ENCODE measurements at regions of chr5 and their contacts with region 1.

Region 1: DNA sequence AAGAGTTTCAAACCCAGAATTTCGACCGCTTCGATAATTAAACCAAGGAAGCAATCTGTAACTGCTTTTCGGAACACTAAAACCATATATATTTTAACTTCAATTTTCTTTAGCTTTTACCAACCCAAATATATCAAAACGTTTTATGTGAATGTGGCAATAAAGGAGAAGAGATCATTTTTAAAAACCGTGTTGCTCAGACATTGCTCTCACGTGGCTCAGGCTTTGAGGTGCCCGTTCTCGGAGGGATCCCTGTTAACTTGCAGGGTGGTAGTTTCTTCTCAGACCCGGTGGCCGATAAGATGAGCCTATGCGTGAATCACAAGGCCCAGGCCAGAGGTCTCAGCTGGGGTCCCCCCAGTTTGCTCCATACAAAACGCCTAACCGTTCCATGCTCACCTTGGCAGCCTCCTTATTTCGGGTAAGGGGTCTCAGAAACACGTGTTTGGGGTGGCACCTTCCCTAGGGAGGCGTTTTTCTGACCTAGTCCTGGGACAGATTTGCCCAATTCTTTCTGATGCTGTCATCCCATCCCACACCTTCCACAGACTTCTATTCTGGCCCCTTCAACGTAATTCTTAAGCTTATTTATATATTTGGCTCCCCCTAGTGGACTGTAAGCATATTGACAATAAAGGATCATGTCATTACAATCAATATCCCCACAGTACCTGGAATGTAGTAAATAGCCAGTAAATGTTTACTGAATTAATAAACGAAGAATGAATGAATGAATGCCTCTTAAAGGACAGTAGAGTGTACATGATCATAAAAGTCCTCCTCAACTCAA is 48.1 kb downstream of the THBS4 start:
- DNase-seq: peak; percentile 64
- H3K4me3 ChIP-seq: peak overlapping the region in 1 of 3 experiments; percentile 23
- H3K27ac ChIP-seq: no peak overlapping the region
- H3K4me1 ChIP-seq: no peaks in the 10 kb centered on the region
- H3K27me3 ChIP-seq: no peaks in the 10 kb centered on the region
- CTCF ChIP-seq: peak; percentile 45 to 51
- POLR2A ChIP-seq: no peak

Region 2: DNA sequence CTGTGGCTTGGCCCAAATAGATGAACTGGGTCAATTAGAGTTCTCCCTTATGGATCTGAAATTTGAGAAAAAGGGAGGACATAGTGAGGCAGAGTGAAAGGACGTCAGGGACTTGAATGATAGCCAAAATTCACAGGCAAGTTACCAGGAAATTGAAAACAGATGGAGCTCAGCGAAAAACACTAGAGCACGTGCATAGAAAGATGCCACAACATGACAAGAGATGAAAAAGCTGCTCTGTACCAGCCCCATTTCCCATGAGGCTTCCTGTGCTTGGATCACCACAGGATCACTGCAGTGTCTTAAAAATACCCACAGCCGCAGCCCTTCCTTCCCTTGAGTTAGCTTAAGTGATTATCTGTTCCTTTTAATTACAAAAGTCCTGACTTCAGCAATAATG is 530.3 kb before region 1 on chr5:
- CTCF ChIA-PET with region 1: interaction called, 12 read pairs
- POLR2A ChIA-PET with region 1: no interaction called
- dilution Hi-C with region 1: no loop called
- intact Hi-C with region 1: no loop called
- DNase-seq: no peak
- H3K4me3 ChIP-seq: no peak overlapping the region
- H3K27ac ChIP-seq: no peak overlapping the region
- H3K4me1 ChIP-seq: no peaks in the 10 kb centered on the region
- H3K27me3 ChIP-seq: peaks cover 0 to 2% of the 10 kb centered on the region in 2 experiments
- CTCF ChIP-seq: no peak
- POLR2A ChIP-seq: no peak

Region 3: GRCh38 chr5:79702606-79703382 is 380.5 kb before region 1 on chr5:
- CTCF ChIA-PET with region 1: interaction called, 15 read pairs
- POLR2A ChIA-PET with region 1: no interaction called
- dilution Hi-C with region 1: no loop called
- intact Hi-C with region 1: loop called (anchors 2 kb)
- DNase-seq: peak; percentile 7
- H3K4me3 ChIP-seq: no peak overlapping the region
- H3K27ac ChIP-seq: no peak overlapping the region
- H3K4me1 ChIP-seq: no peaks in the 10 kb centered on the region
- H3K27me3 ChIP-seq: peaks cover 0 to 2% of the 10 kb centered on the region in 2 experiments
- CTCF ChIP-seq: peak; percentile 46 to 59
- POLR2A ChIP-seq: no peak

Region 4: DNA sequence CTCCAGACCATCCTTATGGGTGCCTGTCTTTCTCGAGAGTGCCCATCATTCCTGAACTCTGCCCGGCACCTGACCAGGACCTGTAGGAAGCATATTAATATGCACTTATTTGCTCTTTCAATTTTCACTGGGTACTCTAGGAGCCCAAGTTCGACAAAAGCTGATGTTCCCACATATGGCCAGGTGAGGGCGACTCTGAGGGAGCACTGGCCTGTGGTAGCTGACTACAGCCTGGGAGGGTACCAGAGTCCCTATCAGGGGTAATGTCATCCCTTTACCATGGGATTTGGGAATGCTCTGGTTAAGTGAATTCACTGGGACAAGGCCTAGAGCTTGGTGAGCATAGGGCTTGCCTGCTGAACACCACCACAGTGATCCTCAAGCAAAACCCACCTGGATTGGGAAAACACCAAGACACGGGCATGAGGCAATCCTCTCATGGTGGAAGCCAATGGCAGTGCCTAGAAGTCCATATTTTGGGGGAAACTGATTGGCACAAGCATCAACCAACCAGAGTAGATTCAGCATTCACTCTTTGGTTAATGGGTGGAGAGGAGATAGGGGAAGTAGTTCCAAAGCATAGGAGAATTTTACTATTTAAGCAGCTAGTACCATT is 204.5 kb before region 1 on chr5:
- CTCF ChIA-PET with region 1: interaction called, 56 read pairs
- POLR2A ChIA-PET with region 1: no interaction called
- dilution Hi-C with region 1: no loop called
- intact Hi-C with region 1: loop called (anchors 1 kb)
- DNase-seq: no peak
- H3K4me3 ChIP-seq: no peak overlapping the region
- H3K27ac ChIP-seq: no peak overlapping the region
- H3K4me1 ChIP-seq: no peaks in the 10 kb centered on the region
- H3K27me3 ChIP-seq: no peaks in the 10 kb centered on the region
- CTCF ChIP-seq: peak in 1 of 2 donors; percentile 15
- POLR2A ChIP-seq: no peak

Region 5: DNA sequence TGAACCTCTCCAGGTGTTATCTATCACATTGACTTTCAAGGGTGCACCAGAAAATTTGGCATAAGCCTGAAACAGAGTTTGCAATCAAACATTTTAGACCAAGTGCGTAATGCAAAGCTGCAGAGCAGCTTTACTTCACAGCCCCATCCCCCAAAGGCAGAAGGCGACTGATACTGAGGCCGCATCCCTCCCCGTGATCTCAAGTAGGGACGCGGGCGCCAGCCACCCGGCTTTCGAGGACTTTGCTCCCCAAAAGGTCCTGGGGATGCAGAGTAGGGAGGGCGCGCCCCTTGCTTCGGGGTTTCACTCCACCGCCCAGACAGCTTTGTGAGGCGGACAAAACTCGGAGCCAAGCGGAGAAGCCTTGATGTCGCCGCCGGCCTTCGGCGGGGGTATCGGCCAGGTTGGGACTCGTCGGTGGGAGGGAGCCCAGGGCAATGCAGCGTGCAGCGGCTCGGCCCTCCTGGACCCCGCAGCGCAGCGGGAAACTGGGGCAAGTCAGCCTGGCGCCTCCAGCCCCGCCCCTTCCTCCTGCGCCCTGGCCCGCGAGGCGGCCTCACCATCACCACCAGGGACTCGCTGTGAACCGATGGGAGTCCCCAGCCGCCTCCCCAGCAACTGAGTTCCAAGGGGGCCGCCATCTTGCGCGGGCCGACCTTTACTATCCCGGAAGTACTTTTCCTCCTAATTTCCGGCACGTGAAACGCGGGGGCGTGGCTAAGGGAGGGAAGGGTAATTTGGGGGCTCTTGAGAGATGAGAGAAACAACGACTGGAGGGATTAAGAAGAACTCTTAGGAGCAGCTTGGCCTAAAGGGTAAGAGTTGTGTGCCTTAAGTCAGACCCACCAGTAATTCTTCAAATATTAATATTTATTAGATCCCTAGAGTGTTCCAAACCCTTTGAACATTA is 92.4 kb before region 1 on chr5 and contains the start of gene MTX3:
- CTCF ChIA-PET with region 1: interaction called, 4 read pairs
- POLR2A ChIA-PET with region 1: no interaction called
- dilution Hi-C with region 1: no loop called
- intact Hi-C with region 1: loop called (anchors 5 kb)
- DNase-seq: peak; percentile 80
- H3K4me3 ChIP-seq: peak within 1 kb of the TSS; percentile 60 to 71 (median 66)
- H3K27ac ChIP-seq: peak within 1 kb of the TSS; percentile 32
- H3K4me1 ChIP-seq: peaks cover 13% of the 10 kb centered on the region
- H3K27me3 ChIP-seq: peaks cover 0 to 2% of the 10 kb centered on the region in 2 experiments
- CTCF ChIP-seq: no peak
- POLR2A ChIP-seq: peak; percentile 49
- total RNA-seq, gene MTX3: 8.3 and 9.4 TPM in 2 replicates

Region 6: DNA sequence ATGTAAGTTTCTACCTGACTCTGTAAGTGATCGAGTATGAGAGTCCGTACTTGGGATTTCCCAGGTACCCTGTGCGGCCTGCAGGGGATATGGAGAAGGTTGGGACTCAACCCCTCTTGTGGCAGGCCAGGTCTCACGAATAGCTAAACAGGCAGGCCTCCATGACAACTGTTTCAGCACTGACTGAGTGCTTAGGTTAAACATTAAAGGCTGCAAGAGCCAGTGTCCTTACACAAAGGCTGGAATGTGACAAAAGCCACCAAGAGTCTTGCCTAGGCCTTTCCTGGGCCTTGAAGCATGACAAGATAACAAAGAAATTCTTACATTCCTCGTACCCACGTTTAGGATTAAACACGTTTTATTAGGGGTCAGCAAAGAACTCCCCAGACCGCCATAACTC is 10.5 kb after region 1 on chr5:
- CTCF ChIA-PET with region 1: interaction called, 51 read pairs
- POLR2A ChIA-PET with region 1: no interaction called
- dilution Hi-C with region 1: no loop called
- intact Hi-C with region 1: no loop called
- DNase-seq: no peak
- H3K4me3 ChIP-seq: no peak overlapping the region
- H3K27ac ChIP-seq: no peak overlapping the region
- H3K4me1 ChIP-seq: no peaks in the 10 kb centered on the region
- H3K27me3 ChIP-seq: no peaks in the 10 kb centered on the region
- CTCF ChIP-seq: no peak
- POLR2A ChIP-seq: no peak

Region 7: DNA sequence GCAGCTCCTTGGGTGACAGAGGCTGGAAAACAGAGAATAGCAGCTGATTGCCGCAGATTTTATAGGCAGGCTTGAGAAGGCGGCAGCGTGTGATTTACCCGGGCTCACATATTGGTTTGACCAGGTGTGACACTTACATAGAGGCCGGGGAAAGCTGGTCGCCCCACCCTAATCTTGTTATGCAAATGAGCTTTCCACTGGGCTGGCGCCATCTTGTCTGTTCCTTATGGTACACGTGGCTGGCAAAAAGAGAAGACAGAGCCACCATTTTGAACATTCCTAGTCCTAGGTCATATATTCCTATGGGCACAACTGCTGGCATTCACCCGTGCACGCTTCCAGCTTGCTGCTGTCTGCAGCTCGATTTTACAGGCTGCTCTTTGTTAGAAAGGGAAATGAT is 225.2 kb after region 1 on chr5:
- CTCF ChIA-PET with region 1: interaction called, 460 read pairs
- POLR2A ChIA-PET with region 1: no interaction called
- dilution Hi-C with region 1: no loop called
- intact Hi-C with region 1: no loop called
- DNase-seq: no peak
- H3K4me3 ChIP-seq: no peak overlapping the region
- H3K27ac ChIP-seq: no peak overlapping the region
- H3K4me1 ChIP-seq: no peaks in the 10 kb centered on the region
- H3K27me3 ChIP-seq: no peaks in the 10 kb centered on the region
- CTCF ChIP-seq: no peak
- POLR2A ChIP-seq: no peak